Body of pancreas (tissue), 4 donors: ENCODE measurements at regions of chr1 and their contacts with region 1.

Region 1: DNA sequence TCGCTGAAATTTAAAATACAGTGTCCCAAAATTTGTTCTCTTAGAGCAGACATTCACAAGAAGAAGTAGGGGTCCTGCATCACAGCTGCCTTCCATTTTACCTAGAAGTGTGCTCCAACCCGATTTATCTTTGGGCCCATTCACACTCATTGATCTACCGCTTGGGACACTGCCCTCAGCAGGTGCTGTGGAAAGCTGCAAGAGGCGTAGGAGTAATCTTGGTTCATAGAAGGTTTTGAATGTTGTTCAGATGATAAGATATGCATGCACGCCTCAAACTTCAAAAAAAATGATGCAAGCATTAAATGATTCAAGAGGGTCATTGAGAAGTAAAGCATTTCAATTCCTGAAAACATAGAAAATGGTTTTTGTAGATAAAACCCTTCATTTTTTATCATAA is 18.6 kb upstream of the C1orf105 start:
- DNase-seq: peak in 1 of 4 donors; percentile 32
- ATAC-seq: no peak
- H3K4me3 ChIP-seq: no peak overlapping the region
- H3K27ac ChIP-seq: no peak overlapping the region
- H3K4me1 ChIP-seq: peaks cover 14% of the 10 kb centered on the region
- H3K27me3 ChIP-seq: no peaks in the 10 kb centered on the region
- CTCF ChIP-seq: peak in 5 of 7 experiments; percentile 14 to 39 (median 19)
- POLR2A ChIP-seq: no peak

Region 2: GRCh38 chr1:172089768-172090510 is 312.0 kb before region 1 on chr1:
- intact Hi-C with region 1: loop called (anchors 10 kb)
- DNase-seq: peak; percentile 69 to 79 (median 71)
- ATAC-seq: peak; percentile 84
- H3K4me3 ChIP-seq: no peak overlapping the region
- H3K27ac ChIP-seq: no peak overlapping the region
- H3K4me1 ChIP-seq: no peaks in the 10 kb centered on the region
- H3K27me3 ChIP-seq: no peaks in the 10 kb centered on the region
- CTCF ChIP-seq: peak; percentile 62 to 83 (median 79)
- POLR2A ChIP-seq: no peak

Region 3: GRCh38 chr1:172286629-172287076 is 115.2 kb before region 1 on chr1:
- intact Hi-C with region 1: no loop called
- DNase-seq: peak in 3 of 4 donors; percentile 39 to 65 (median 39)
- ATAC-seq: peak; percentile 83
- H3K4me3 ChIP-seq: no peak overlapping the region
- H3K27ac ChIP-seq: peak overlapping the region; percentile 11 to 72 (median 42)
- H3K4me1 ChIP-seq: peaks cover 20% of the 10 kb centered on the region
- H3K27me3 ChIP-seq: no peaks in the 10 kb centered on the region
- CTCF ChIP-seq: no peak
- POLR2A ChIP-seq: no peak

Region 4: GRCh38 chr1:172373864-172374263 is 28.0 kb before region 1 on chr1:
- intact Hi-C with region 1: no loop called
- DNase-seq: no peak
- ATAC-seq: no peak
- H3K4me3 ChIP-seq: no peak overlapping the region
- H3K27ac ChIP-seq: no peak overlapping the region
- H3K4me1 ChIP-seq: no peaks in the 10 kb centered on the region
- H3K27me3 ChIP-seq: no peaks in the 10 kb centered on the region
- CTCF ChIP-seq: no peak
- POLR2A ChIP-seq: no peak